Calu3 (cell line): ENCODE measurements at regions of chr5 and their contacts with region 1.

Region 1: GRCh38 chr5:109468737-109469420 is 59.1 kb upstream of the PJA2 start:
- DNase-seq: peak; percentile 95
- H3K4me3 Mint-ChIP-seq: no peak overlapping the region
- H3K27ac Mint-ChIP-seq: peak overlapping the region; percentile 2
- H3K4me1 Mint-ChIP-seq: peaks cover 39% of the 10 kb centered on the region
- H3K27me3 Mint-ChIP-seq: no peaks in the 10 kb centered on the region
- CTCF ChIP-seq: peak; percentile 66

Region 2: DNA sequence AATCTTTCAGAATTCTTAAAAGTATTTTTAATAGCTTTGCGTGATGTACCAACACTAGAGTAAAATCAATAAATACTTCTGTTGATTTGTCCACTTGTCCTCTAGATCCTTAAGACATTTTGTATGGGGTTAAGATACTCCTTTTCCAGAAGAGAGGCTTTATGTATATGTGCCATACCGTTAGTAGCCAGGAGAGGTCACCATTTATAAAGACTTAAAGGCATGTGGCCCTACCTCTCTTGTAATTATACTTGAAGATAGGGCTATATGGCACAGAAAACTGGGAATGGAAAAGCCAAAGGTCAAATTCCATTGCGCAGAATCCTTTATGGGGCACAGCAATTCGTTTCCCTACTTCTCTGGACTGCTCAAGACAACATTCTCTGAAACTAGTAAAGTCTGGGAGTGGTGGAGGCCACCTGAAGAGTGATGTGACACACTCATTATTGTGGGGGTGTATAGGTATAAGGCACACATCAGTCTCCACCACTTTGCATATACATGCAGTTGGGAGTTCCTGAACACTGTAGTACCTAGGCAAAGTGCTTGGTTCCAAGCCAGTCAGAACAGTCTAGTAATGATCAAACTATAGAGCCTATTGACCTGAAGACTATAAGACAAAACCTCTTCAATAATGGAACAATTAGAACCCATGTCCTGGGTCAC is 946.9 kb before region 1 on chr5:
- CTCF ChIA-PET with region 1: no interaction called
- intact Hi-C with region 1: loop called (anchors 5 kb)
- DNase-seq: peak; percentile 68
- H3K4me3 Mint-ChIP-seq: no peak overlapping the region
- H3K27ac Mint-ChIP-seq: no peak overlapping the region
- H3K4me1 Mint-ChIP-seq: no peaks in the 10 kb centered on the region
- H3K27me3 Mint-ChIP-seq: peaks cover 43% of the 10 kb centered on the region
- CTCF ChIP-seq: peak; percentile 68

Region 3: GRCh38 chr5:108681079-108681921 is 787.6 kb before region 1 on chr5:
- CTCF ChIA-PET with region 1: interaction called, 6 read pairs
- intact Hi-C with region 1: loop called (anchors 5 kb)
- DNase-seq: peak; percentile 57
- H3K4me3 Mint-ChIP-seq: no peak overlapping the region
- H3K27ac Mint-ChIP-seq: no peak overlapping the region
- H3K4me1 Mint-ChIP-seq: peaks cover 21% of the 10 kb centered on the region
- H3K27me3 Mint-ChIP-seq: no peaks in the 10 kb centered on the region
- CTCF ChIP-seq: peak; percentile 66

Region 4: GRCh38 chr5:108753877-108754276 is 715.0 kb before region 1 on chr5:
- CTCF ChIA-PET with region 1: no interaction called
- intact Hi-C with region 1: loop called (anchors 5 kb)
- DNase-seq: no peak
- H3K4me3 Mint-ChIP-seq: no peak overlapping the region
- H3K27ac Mint-ChIP-seq: peak overlapping the region; percentile 84
- H3K4me1 Mint-ChIP-seq: peaks cover 24% of the 10 kb centered on the region
- H3K27me3 Mint-ChIP-seq: no peaks in the 10 kb centered on the region
- CTCF ChIP-seq: no peak

Region 5: DNA sequence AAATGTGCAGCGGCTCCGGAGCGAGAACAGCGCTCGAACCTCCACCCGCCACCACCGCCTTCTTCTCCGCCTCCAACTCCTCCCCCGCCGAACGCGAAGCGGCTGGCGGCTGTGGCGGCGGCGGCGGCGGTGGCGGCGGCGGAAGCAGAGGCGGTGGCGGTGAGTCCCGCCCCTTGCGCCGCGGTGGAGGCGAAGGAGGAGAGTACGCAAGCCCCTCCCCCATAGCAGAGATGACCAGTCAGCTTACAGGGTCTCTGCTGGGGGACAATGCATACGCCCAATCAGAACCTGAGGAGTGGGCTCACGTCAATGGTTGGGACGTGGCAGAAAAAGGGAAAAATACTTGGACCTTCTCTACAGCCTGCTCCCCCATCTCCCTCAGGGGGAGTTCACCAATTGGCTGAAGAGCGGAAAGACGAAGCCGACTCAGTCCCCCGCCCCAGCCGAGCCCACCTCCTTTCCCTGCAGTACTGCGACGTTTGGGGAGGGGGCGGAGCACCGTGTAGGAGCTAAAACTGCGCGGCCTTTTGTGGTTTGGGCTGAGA is 59.0 kb before region 1 on chr5 and contains the start of gene PJA2:
- CTCF ChIA-PET with region 1: interaction called, 10 read pairs
- intact Hi-C with region 1: loop called (anchors 2 kb)
- DNase-seq: peak; percentile 99
- H3K4me3 Mint-ChIP-seq: peak within 1 kb of the TSS; percentile 99
- H3K27ac Mint-ChIP-seq: peak within 1 kb of the TSS; percentile 97
- H3K4me1 Mint-ChIP-seq: peaks cover 32% of the 10 kb centered on the region
- H3K27me3 Mint-ChIP-seq: no peaks in the 10 kb centered on the region
- CTCF ChIP-seq: peak; percentile 34
- total RNA-seq, gene PJA2: 81.0 and 89.0 TPM in 2 replicates

Region 6: DNA sequence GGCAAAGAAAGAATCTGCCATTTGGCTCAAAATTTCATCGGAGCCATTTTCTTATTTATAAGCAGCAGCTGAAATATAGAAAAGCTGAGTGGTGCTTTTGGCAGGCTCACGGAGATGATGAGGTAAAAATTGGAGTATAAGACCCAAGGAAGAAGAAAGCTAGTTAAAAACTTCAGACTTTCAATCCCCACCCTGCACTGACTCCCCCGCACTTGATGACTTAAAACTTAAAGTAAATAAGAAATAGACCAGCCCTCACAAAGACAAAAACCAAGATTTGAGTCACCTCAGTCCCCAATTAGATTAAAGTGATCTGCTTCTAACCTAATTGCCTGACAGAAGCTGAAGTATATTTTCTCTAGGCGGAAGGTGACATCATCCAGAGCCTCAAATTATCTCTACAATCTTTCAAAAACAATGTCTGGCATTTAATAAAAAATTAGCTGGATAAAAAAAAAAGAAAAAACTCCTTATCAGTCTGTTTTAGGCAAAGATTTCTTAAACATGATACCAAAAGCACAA is 64.9 kb after region 1 on chr5:
- CTCF ChIA-PET with region 1: no interaction called
- intact Hi-C with region 1: no loop called
- DNase-seq: no peak
- H3K4me3 Mint-ChIP-seq: no peak overlapping the region
- H3K27ac Mint-ChIP-seq: no peak overlapping the region
- H3K4me1 Mint-ChIP-seq: peaks cover 17% of the 10 kb centered on the region
- H3K27me3 Mint-ChIP-seq: peaks cover 3% of the 10 kb centered on the region
- CTCF ChIP-seq: no peak

Region 7: DNA sequence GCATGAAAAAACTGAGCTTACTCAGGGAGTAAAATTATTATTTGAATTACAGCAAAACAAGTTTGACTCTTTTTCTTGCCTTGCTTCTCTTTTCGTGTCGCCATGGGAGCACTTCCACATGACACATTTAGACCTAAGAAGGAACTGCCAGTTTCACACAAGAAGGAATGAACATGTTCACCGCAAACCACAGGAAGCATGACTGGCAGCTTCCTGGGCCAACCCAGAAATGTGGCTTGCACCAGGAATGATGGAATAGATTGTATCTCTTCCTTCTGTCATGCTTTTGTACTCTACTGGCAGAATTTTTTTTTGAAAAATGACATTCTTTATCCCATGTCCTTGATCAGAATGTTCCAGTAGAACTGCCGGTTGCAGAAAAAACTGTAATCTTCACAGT is 187.9 kb after region 1 on chr5:
- CTCF ChIA-PET with region 1: no interaction called
- intact Hi-C with region 1: no loop called
- DNase-seq: no peak
- H3K4me3 Mint-ChIP-seq: no peak overlapping the region
- H3K27ac Mint-ChIP-seq: no peak overlapping the region
- H3K4me1 Mint-ChIP-seq: no peaks in the 10 kb centered on the region
- H3K27me3 Mint-ChIP-seq: no peaks in the 10 kb centered on the region
- CTCF ChIP-seq: no peak

Region 8: DNA sequence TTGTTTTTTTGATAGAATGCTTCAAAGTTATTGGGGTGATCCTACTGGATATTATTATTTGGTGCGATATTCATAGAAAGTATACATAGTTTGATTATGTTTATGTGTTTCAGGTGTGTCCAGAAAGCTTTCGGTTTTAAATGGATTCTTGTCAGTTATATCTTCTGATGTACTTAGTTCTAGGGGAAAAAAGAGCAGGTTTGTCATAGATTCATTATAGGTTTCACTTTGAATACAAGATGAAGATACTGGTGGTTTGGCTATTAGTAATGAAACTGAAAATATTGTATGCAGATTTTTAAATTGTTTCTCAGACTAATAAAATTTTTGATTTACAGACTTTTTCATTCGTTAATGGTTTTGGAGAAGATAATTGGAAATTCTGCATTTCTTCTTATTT is 319.7 kb after region 1 on chr5:
- CTCF ChIA-PET with region 1: no interaction called
- intact Hi-C with region 1: no loop called
- DNase-seq: no peak
- H3K4me3 Mint-ChIP-seq: no peak overlapping the region
- H3K27ac Mint-ChIP-seq: no peak overlapping the region
- H3K4me1 Mint-ChIP-seq: no peaks in the 10 kb centered on the region
- H3K27me3 Mint-ChIP-seq: no peaks in the 10 kb centered on the region
- CTCF ChIP-seq: no peak

Region 9: GRCh38 chr5:109852371-109853155 is 383.7 kb after region 1 on chr5:
- CTCF ChIA-PET with region 1: no interaction called
- intact Hi-C with region 1: no loop called
- DNase-seq: no peak
- H3K4me3 Mint-ChIP-seq: no peak overlapping the region
- H3K27ac Mint-ChIP-seq: no peak overlapping the region
- H3K4me1 Mint-ChIP-seq: no peaks in the 10 kb centered on the region
- H3K27me3 Mint-ChIP-seq: no peaks in the 10 kb centered on the region
- CTCF ChIP-seq: no peak